Dorsolateral prefrontal cortex (tissue), 120 donors: ENCODE measurements at regions of chr18 and their contacts with region 1.

Region 1: DNA sequence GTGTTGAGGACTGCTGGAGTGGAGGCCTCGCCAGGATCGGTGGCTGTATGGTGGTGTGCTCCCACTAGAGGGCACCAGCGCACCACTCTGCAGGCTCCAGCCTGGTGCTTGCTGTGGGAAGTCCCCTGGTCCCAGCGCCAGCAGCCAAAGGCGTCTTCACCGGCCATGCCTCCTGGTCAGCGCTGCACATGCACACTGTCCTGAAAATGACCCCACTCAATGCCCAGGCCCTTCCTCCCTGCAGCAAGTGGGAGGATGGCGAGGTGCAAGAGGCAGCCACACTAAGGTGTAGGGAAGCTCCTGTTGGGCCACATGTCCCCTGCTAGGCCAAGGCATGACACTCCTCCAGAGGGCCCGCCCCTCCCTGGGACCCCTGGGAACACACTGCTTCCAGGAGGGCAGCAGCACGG is 136.5 kb downstream of the CTIF start:
- DNase-seq: peak; percentile 86 to 92 (median 88)
- H3K4me3 ChIP-seq: peak overlapping the region in 1 of 59 donors; percentile 13
- H3K27ac ChIP-seq: peak overlapping the region in 3 of 59 donors; percentile 7 to 32 (median 27)
- H3K27me3 ChIP-seq: no peaks in the 10 kb centered on the region
- CTCF ChIP-seq: peak; percentile 70 to 98 (median 94)

Region 2: GRCh38 chr18:48693625-48694262 is 18.4 kb after region 1 on chr18:
- intact Hi-C with region 1: no loop called
- DNase-seq: no peak
- H3K4me3 ChIP-seq: no peak overlapping the region
- H3K27ac ChIP-seq: peak overlapping the region in 2 of 59 donors; percentile 5 to 76
- H3K27me3 ChIP-seq: no peaks in the 10 kb centered on the region
- CTCF ChIP-seq: no peak

Region 3: GRCh38 chr18:48859311-48860268 is 184.2 kb after region 1 on chr18:
- intact Hi-C with region 1: loop called (anchors 5 to 10 kb)
- DNase-seq: peak; percentile 85 to 94 (median 92)
- H3K4me3 ChIP-seq: peak overlapping the region in 33 of 59 donors; percentile 1 to 47 (median 24)
- H3K27ac ChIP-seq: peak overlapping the region; percentile 11 to 98 (median 93)
- H3K27me3 ChIP-seq: no peaks in the 10 kb centered on the region
- CTCF ChIP-seq: peak in 48 of 56 donors; percentile 4 to 64 (median 35)

Region 4: DNA sequence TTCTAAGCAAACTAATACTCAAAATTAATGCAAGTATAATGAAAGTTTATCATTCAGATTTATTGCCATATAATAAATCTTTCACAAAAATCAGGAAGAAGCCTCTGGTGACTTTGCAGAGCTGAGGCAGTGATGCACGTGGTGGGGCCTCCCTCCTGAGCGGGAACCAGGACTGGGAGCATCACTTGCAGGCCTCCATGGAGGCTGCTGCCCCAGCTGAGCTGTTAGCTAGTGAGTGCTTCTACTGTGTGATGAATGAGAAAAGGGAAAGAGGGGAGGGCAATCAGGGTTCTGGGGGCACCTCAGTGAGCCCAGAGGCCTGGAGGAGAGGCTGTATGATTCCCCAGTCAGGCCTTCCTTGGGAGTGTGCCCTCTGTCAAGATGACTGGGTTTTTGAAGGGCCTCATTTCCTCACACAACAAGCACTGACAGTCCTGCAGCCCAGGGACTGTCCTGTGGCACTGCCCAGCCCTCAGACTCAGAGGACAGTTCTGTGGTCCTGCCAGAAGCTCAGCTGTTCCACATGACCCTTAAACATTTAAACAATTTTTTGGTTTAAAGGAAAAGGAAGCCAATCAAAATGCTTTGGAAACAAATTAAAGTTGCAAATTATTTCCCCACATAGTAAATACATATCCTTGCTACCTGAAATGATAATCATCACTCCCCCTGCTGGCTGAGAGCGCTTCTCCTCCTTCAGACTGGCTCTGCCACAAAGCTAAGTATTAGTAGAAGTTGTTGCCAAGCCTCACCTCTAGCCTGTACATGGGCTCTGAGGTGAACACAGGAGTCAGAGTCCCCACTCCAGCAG is 366.3 kb after region 1 on chr18:
- intact Hi-C with region 1: loop called in 1 of 2 experiments (anchors 10 kb)
- DNase-seq: peak in 2 of 10 donors; percentile 23 to 58
- H3K4me3 ChIP-seq: no peak overlapping the region
- H3K27ac ChIP-seq: no peak overlapping the region
- H3K27me3 ChIP-seq: no peaks in the 10 kb centered on the region
- CTCF ChIP-seq: peak in 49 of 56 donors; percentile 27 to 66 (median 43)

Region 5: DNA sequence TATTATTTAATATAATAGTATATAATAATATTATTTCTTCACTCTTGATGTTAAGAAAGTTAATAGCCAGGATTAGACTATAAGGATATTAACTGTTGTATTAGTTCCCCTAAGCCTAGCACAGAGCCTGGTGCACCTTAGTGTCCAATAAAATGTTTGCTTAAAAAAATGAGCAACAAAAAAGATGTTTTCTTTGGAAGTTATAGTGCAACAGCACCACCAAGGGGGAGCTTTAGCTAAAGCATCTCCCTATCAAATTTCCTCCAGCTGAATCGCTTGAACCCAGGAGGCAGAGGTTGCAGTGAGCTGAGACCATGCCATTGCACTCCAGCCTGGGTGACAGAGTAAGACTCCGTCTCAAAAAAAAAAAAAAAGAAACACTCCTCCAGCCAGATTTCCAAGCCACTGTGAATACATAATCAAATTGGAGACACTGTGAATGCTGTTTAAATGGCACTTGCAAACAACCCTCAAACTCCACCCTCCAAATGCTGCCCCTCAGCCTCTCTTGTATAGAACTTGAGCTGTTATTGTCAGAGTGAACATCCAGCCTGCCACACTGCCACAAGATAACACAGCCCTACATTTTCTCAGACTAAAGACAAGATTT is 563.2 kb after region 1 on chr18:
- intact Hi-C with region 1: loop called (anchors 2 to 5 kb)
- DNase-seq: no peak
- H3K4me3 ChIP-seq: no peak overlapping the region
- H3K27ac ChIP-seq: peak overlapping the region in 7 of 59 donors; percentile 8 to 46 (median 18)
- H3K27me3 ChIP-seq: no peaks in the 10 kb centered on the region
- CTCF ChIP-seq: peak in 55 of 56 donors; percentile 32 to 79 (median 62)

Region 6: GRCh38 chr18:49400398-49401072 is 725.2 kb after region 1 on chr18:
- intact Hi-C with region 1: loop called in 1 of 2 experiments (anchors 5 kb)
- DNase-seq: no peak
- H3K4me3 ChIP-seq: peak overlapping the region in 4 of 59 donors; percentile 1 to 39 (median 14)
- H3K27ac ChIP-seq: peak overlapping the region; percentile 1 to 94 (median 82)
- H3K27me3 ChIP-seq: no peaks in the 10 kb centered on the region
- CTCF ChIP-seq: no peak

Region 7: DNA sequence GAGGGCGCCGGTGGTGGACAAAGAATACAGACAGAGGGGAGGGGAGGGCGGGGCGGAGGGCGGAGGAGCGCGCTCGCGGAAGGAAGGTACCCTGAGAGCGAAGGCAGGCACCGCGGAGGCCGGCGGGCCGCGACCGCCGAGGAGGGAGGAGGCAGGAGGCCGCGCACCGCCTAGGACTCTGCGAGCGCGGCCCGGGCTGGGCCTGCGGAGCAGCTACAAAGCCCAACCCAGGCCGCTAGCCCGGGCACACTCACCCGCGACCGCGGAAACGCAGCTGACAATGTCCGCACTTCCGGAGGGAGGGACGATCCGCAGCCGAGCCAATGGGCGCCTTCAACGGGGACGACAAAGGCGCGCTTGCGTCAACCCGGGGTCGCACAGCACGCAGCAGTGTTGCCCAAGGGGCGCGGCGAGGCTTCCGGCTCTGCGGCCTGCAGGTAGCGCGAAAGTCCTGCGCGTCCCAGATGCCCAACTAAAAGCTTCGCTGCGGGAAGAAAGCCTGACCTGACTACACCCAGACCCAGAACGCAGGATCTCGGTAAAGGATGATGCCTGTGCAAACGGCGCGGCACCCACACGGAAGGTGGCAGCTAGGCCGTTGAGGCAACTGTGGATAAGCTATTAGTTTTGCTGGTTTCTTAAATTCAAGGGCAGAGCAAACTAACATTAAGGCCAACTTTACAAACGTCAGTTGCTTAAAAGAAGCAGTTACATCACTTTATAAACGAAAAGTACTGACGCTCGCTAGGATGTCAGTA is 811.8 kb after region 1 on chr18 and contains the start of gene C18orf32:
- intact Hi-C with region 1: loop called in 1 of 2 experiments (anchors 5 kb)
- DNase-seq: peak; percentile 94 to 99 (median 96)
- H3K4me3 ChIP-seq: peak within 1 kb of the TSS; percentile 71 to 97 (median 89)
- H3K27ac ChIP-seq: peak within 1 kb of the TSS; percentile 70 to 98 (median 94)
- H3K27me3 ChIP-seq: no peaks in the 10 kb centered on the region
- CTCF ChIP-seq: peak in 21 of 56 donors; percentile 7 to 40 (median 23)
- total RNA-seq, gene C18orf32: 65.6 to 143 (median 105) TPM